ENCODE measurements at regions of chr19 and their contacts with region 1.

Region 1: DNA sequence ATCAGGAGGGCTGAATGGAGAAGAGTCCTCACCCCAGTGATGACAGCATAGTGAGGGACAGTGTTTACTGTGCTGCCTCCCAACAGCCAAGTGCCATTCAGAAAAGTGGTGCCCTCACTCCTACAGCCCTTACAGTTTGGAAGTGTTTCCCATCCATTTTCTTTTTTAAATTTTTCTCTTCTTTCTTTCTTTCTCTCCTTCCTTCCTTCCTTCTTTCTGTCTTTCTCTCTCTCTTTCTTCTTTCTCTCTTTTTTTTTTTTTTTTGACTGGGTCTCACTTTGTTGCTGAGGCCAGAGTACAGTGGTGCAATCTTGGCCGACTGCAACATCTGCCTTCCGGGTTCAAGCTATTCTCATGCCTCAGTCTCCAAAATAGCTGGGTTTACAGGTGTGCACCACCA is 755.3 kb downstream of the UQCRFS1 start:
- DNase-seq: no peak
- ATAC-seq: no peak
- H3K4me3 ChIP-seq: no peak overlapping the region
- H3K4me3 Mint-ChIP-seq: no peak overlapping the region
- H3K27ac ChIP-seq: no peak overlapping the region
- H3K27ac Mint-ChIP-seq: no peak overlapping the region
- H3K4me1 ChIP-seq: no peaks in the 10 kb centered on the region
- H3K4me1 Mint-ChIP-seq: peaks cover 0 to 13% (median 0%) of the 10 kb centered on the region in 3 donors
- H3K27me3 ChIP-seq: no peaks in the 10 kb centered on the region
- H3K27me3 Mint-ChIP-seq: no peaks in the 10 kb centered on the region

Region 2: DNA sequence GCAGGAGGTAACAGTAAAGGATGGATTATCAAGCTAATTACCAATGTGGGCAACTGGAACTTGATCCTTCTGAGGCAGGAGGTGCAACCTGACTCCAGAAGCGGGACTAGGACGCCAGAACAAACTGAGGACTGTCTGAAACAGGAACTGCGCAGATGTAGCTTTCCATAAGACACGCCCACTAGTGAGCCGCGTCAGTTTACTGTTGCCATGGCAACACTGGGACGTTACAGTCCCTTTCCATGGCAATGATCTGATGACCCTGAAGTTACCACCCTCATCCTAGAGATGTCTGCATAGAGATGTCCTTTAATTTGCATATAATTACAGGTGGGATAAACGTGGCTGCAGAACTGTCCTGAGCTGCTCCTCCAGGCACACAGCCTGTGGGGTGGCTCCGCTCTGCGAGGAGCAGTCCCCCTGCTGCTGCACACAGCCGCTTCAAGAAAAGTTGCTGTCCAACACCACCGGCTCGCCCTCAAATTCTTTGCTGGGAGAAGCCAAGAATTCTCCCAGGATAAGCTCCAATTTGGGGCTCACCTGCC is 61.3 kb before region 1 on chr19:
- CTCF ChIA-PET with region 1: interaction called in 1 of 2 experiments, 13 read pairs
- POLR2A ChIA-PET with region 1: no interaction called
- DNase-seq: no peak
- ATAC-seq: no peak
- H3K4me3 ChIP-seq: no peak overlapping the region
- H3K4me3 Mint-ChIP-seq: no peak overlapping the region
- H3K27ac ChIP-seq: no peak overlapping the region
- H3K27ac Mint-ChIP-seq: no peak overlapping the region
- H3K4me1 ChIP-seq: peaks cover 0 to 5% of the 10 kb centered on the region in 2 experiments
- H3K4me1 Mint-ChIP-seq: peaks cover 9 to 15% (median 13%) of the 10 kb centered on the region in 3 donors
- H3K27me3 ChIP-seq: peaks cover 0 to 3% of the 10 kb centered on the region in 2 experiments
- H3K27me3 Mint-ChIP-seq: no peaks in the 10 kb centered on the region